Caco-2 (cell line): ENCODE measurements at regions of chr4 and their contacts with region 1.

Region 1: GRCh38 chr4:16264798-16265197 is 38.5 kb upstream of the TAPT1 start:
- DNase-seq: peak in 1 of 2 experiments; percentile 46
- H3K4me3 ChIP-seq: no peak overlapping the region
- H3K4me3 Mint-ChIP-seq: no peak overlapping the region
- H3K27ac Mint-ChIP-seq: no peak overlapping the region
- H3K4me1 ChIP-seq: no peaks in the 10 kb centered on the region
- H3K4me1 Mint-ChIP-seq: no peaks in the 10 kb centered on the region
- H3K27me3 ChIP-seq: no peaks in the 10 kb centered on the region
- H3K27me3 Mint-ChIP-seq: no peaks in the 10 kb centered on the region
- CTCF ChIP-seq: peak; percentile 44 to 45

Region 2: GRCh38 chr4:15805583-15806517 is 458.9 kb before region 1 on chr4:
- CTCF ChIA-PET with region 1: interaction called, 4 read pairs
- POLR2A ChIA-PET with region 1: no interaction called
- intact Hi-C with region 1: loop called (anchors 5 kb)
- DNase-seq: peak in 1 of 2 experiments; percentile 52
- H3K4me3 ChIP-seq: no peak overlapping the region
- H3K4me3 Mint-ChIP-seq: no peak overlapping the region
- H3K27ac Mint-ChIP-seq: no peak overlapping the region
- H3K4me1 ChIP-seq: no peaks in the 10 kb centered on the region
- H3K4me1 Mint-ChIP-seq: peaks cover 9% of the 10 kb centered on the region
- H3K27me3 ChIP-seq: no peaks in the 10 kb centered on the region
- H3K27me3 Mint-ChIP-seq: peaks cover 5% of the 10 kb centered on the region
- CTCF ChIP-seq: peak; percentile 65 to 72

Region 3: GRCh38 chr4:15963001-15963451 is 301.8 kb before region 1 on chr4 and contains the start of gene FGFBP2:
- CTCF ChIA-PET with region 1: interaction called, 9 read pairs
- POLR2A ChIA-PET with region 1: interaction called, 3 read pairs
- intact Hi-C with region 1: loop called (anchors 1 kb)
- DNase-seq: peak; percentile 56 to 59
- H3K4me3 ChIP-seq: no peak within 1 kb of the TSS
- H3K4me3 Mint-ChIP-seq: no peak within 1 kb of the TSS
- H3K27ac Mint-ChIP-seq: no peak within 1 kb of the TSS
- H3K4me1 ChIP-seq: no peaks in the 10 kb centered on the region
- H3K4me1 Mint-ChIP-seq: no peaks in the 10 kb centered on the region
- H3K27me3 ChIP-seq: no peaks in the 10 kb centered on the region
- H3K27me3 Mint-ChIP-seq: no peaks in the 10 kb centered on the region
- CTCF ChIP-seq: peak; percentile 55 to 57
- total RNA-seq, gene FGFBP2: 0.25 TPM in 1 of 2 replicates, not detected in the other

Region 4: GRCh38 chr4:16196478-16197393 is 68.1 kb before region 1 on chr4:
- CTCF ChIA-PET with region 1: interaction called, 20 read pairs
- POLR2A ChIA-PET with region 1: no interaction called
- intact Hi-C with region 1: loop called (anchors 2 kb)
- DNase-seq: peak in 1 of 2 experiments; percentile 67
- H3K4me3 ChIP-seq: no peak overlapping the region
- H3K4me3 Mint-ChIP-seq: peak overlapping the region; percentile 52
- H3K27ac Mint-ChIP-seq: peak overlapping the region; percentile 83
- H3K4me1 ChIP-seq: no peaks in the 10 kb centered on the region; the same call in 1 of the 2 replicates
- H3K4me1 Mint-ChIP-seq: peaks cover 14% of the 10 kb centered on the region
- H3K27me3 ChIP-seq: no peaks in the 10 kb centered on the region
- H3K27me3 Mint-ChIP-seq: no peaks in the 10 kb centered on the region
- CTCF ChIP-seq: peak in 1 of 2 experiments; percentile 41

Region 5: DNA sequence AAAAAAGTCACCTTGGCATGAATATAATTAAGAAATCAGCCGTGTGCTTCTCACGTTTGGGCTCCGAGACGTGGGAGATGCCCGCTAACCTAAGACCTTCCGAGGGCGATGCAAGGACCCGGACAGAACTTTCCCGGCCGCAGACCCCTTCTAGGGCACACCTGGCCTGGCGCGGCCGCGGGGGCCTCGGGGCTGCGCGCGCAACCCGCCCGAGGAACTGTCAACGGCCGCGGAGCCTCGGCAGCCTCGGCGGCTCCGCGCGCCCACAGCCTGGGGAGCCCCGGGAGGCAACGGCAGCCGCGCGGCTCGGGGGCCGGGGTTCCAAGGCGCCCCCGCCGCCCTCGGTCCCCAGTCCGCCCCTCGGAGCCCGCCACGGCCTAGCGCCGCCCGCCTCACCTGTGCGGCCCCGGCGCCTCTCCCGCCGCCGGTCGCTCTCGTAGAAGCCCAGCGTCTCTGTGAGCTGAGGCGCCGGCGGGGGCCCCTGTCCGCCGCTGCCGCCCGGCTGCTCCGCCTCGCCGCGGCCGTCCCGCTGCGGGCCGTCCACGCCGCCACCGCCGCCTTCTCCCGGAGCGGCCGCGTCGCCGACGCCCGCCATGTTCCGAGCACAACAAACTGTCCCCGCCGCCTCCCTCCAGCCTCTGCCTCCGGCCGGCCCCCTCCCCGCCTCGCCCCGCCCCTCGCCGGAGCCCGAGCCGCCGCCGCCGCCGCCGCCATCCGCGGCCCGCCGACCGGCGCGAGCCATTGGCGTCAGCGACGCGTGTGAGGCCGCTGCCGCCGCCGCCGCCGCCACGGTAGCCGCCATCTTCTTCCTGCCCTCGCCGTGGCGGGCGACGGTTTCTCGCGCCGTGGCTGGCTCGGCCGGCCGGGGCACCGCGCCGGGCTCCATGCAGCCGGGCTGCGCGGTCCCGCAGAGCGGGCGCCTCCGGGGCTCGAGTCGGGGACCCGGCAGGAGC is 38.7 kb before region 1 on chr4 and contains the start of gene TAPT1:
- CTCF ChIA-PET with region 1: interaction called, 3 read pairs
- POLR2A ChIA-PET with region 1: no interaction called
- intact Hi-C with region 1: loop called (anchors 1 kb)
- DNase-seq: peak; percentile 77 to 86
- H3K4me3 ChIP-seq: peak within 1 kb of the TSS; percentile 86
- H3K4me3 Mint-ChIP-seq: peak within 1 kb of the TSS; percentile 83
- H3K27ac Mint-ChIP-seq: peak within 1 kb of the TSS; percentile 86
- H3K4me1 ChIP-seq: peaks cover 27% of the 10 kb centered on the region
- H3K4me1 Mint-ChIP-seq: peaks cover 27% of the 10 kb centered on the region
- H3K27me3 ChIP-seq: no peaks in the 10 kb centered on the region
- H3K27me3 Mint-ChIP-seq: no peaks in the 10 kb centered on the region
- CTCF ChIP-seq: no peak
- total RNA-seq, gene TAPT1: 23.7 and 24.9 TPM in 2 replicates